Activated B cell treated with CpG ODN at 0.5 μM for 24 hours (primary cell): ENCODE measurements at regions of chr11 and their contacts with region 1.

Region 1: GRCh38 chr11:18105802-18106574 is at the start of gene SAAL1:
- DNase-seq: peak; percentile 91
- ATAC-seq: peak; percentile 97
- H3K4me3 Mint-ChIP-seq: peak within 1 kb of the TSS; percentile 91
- H3K27ac Mint-ChIP-seq: peak within 1 kb of the TSS; percentile 76
- H3K4me1 Mint-ChIP-seq: peaks cover 28% of the 10 kb centered on the region
- H3K27me3 Mint-ChIP-seq: peaks cover 14% of the 10 kb centered on the region
- CTCF ChIP-seq: no peak
- total RNA-seq, gene SAAL1: 34.4 and 39.7 TPM in 2 replicates

Region 2: GRCh38 chr11:17730608-17731462 is 375.2 kb before region 1 on chr11:
- CTCF ChIA-PET with region 1: no interaction called
- POLR2A ChIA-PET with region 1: no interaction called
- intact Hi-C with region 1: loop called (anchors 5 kb)
- DNase-seq: peak; percentile 42
- ATAC-seq: peak; percentile 73
- H3K4me3 Mint-ChIP-seq: no peak overlapping the region
- H3K27ac Mint-ChIP-seq: no peak overlapping the region
- H3K4me1 Mint-ChIP-seq: peaks cover 5% of the 10 kb centered on the region
- H3K27me3 Mint-ChIP-seq: peaks cover 39% of the 10 kb centered on the region
- CTCF ChIP-seq: no peak

Region 3: DNA sequence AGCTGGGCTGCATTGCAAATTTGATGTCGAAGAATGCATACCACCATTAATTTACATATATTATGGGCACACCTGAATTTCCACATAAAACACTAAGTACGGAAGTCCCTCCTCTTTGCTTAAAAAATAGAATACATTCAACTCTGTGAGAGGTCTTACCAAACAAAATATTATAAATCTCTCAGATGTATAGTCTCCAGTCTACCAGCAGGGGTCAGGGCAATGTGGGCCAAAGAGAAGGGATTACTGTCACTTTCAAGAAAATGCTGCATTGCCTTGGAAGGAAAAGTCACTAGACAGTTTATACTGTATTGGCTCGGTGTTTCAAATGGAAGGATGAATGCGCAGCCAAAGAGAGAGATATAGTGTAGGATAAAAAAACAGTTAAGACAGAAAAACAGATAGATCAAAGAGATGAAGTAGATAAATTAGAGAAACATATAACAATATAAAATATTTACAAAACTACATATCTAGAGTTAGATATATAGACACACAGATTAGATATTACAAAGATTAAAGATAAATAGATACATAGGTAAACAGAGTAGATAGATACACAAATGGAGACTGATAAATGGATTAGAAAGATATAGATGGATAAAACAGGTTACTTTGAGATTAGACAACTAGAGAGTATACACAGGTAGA is 114.1 kb before region 1 on chr11:
- CTCF ChIA-PET with region 1: interaction called, 11 read pairs
- POLR2A ChIA-PET with region 1: no interaction called
- intact Hi-C with region 1: loop called (anchors 1 kb)
- DNase-seq: no peak
- ATAC-seq: peak; percentile 74
- H3K4me3 Mint-ChIP-seq: no peak overlapping the region
- H3K27ac Mint-ChIP-seq: no peak overlapping the region
- H3K4me1 Mint-ChIP-seq: no peaks in the 10 kb centered on the region
- H3K27me3 Mint-ChIP-seq: no peaks in the 10 kb centered on the region
- CTCF ChIP-seq: peak; percentile 99

Region 4: GRCh38 chr11:18091731-18092130 is 14.3 kb before region 1 on chr11:
- CTCF ChIA-PET with region 1: interaction called, 11 read pairs
- POLR2A ChIA-PET with region 1: interaction called, 6 read pairs
- intact Hi-C with region 1: no loop called
- DNase-seq: no peak
- ATAC-seq: no peak
- H3K4me3 Mint-ChIP-seq: no peak overlapping the region
- H3K27ac Mint-ChIP-seq: no peak overlapping the region
- H3K4me1 Mint-ChIP-seq: no peaks in the 10 kb centered on the region
- H3K27me3 Mint-ChIP-seq: no peaks in the 10 kb centered on the region
- CTCF ChIP-seq: no peak